Panc1 (cell line): ENCODE measurements at regions of chr3 and their contacts with region 1.

Region 1: DNA sequence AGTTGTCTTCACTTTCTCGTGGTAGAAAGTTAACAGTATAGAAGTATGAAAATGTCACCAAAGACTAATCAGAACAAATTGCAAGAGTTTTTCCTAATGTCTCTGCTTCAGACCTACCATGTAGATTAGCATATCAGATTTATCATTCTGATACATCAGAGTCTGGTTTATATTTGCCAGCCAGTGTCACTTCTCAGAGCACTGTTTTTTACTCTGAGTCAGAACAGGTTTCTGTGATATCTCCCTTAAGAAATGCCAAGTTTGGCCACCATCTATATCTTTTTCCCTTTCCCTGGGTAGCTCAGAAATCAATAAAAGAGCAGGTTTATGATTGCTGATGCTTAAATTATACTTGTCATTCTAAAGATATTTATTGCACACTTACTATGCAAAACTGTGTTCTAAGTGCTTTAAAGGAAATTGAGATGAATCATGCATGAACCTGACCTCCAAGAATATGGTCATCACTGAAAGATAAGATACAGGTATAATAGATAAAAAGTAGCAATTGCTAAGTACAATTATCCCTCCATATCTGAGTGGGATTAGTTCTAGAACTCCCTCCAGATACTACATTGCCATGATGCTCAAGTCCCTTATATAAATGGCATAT is 672.7 kb upstream of the NAALADL2 start:
- DNase-seq: no peak
- ATAC-seq: no peak
- H3K4me3 ChIP-seq: no peak overlapping the region
- H3K27ac ChIP-seq: no peak overlapping the region
- H3K4me1 ChIP-seq: no peaks in the 10 kb centered on the region
- H3K27me3 ChIP-seq: no peaks in the 10 kb centered on the region
- CTCF ChIP-seq: no peak

Region 2: DNA sequence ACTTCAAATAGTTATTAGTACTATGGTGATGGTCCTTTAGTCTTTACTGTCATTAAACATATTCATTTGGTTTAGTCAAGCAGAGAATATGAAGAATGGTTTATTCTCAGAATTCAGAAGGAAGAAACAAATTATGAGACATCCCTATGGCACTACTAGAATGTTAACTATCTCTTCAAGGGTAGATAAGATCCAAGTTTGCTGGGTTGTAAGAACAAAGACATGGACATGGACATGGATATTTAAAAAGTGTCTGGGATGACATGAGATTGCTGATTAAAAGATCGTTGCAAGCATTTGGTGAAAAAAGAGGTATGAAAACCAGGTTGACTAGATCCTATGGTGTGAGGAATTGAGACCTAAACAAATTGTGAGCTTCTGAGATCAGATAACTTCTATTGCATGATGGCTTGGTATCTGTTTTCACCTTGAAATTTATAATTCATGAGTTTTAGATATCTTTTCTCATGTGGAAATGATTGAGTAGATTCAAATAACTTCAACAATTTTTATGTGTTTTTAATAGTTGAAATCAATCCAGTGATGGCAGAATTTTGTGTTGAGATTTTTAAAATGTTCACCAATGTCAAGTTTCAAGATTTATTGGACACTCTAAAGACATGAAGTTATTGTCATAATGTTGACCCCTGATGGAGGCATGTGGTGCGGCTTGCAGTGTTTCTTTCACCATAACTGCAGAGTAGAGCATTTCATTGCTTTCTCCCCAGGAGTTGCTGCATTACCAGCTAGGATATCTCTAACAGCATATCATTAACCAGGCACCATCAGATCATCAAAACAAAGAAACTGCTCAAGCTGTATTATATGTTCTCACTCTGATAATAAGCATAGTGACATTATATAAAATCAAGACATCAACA is 745.2 kb after region 1 on chr3:
- CTCF ChIA-PET with region 1: no interaction called
- POLR2A ChIA-PET with region 1: interaction called, 10 read pairs
- in situ Hi-C with region 1: no loop called
- intact Hi-C with region 1: no loop called
- DNase-seq: no peak
- ATAC-seq: no peak
- H3K4me3 ChIP-seq: no peak overlapping the region
- H3K27ac ChIP-seq: no peak overlapping the region
- H3K4me1 ChIP-seq: no peaks in the 10 kb centered on the region
- H3K27me3 ChIP-seq: no peaks in the 10 kb centered on the region
- CTCF ChIP-seq: no peak